Prostate gland (tissue), 2 donors: ENCODE measurements at regions of chr4 and their contacts with region 1.

Region 1: GRCh38 chr4:87043044-87043820 is 108.4 kb downstream of the AFF1 start:
- DNase-seq: no peak
- H3K4me3 ChIP-seq: no peak overlapping the region
- H3K27ac ChIP-seq: no peak overlapping the region
- H3K4me1 ChIP-seq: peaks cover 3% of the 10 kb centered on the region
- H3K27me3 ChIP-seq: no peaks in the 10 kb centered on the region
- CTCF ChIP-seq: no peak
- POLR2A ChIP-seq: no peak

Region 2: GRCh38 chr4:87006676-87007527 is 36.3 kb before region 1 on chr4:
- intact Hi-C with region 1: loop called (anchors 5 kb)
- DNase-seq: peak; percentile 93
- H3K4me3 ChIP-seq: peak overlapping the region; percentile 69 to 82
- H3K27ac ChIP-seq: peak overlapping the region; percentile 96 to 97
- H3K4me1 ChIP-seq: peaks cover 12% of the 10 kb centered on the region
- H3K27me3 ChIP-seq: no peaks in the 10 kb centered on the region
- CTCF ChIP-seq: peak in 1 of 4 experiments; percentile 21
- POLR2A ChIP-seq: peak; percentile 95

Region 3: GRCh38 chr4:87078987-87079486 is 35.8 kb after region 1 on chr4:
- intact Hi-C with region 1: loop called (anchors 5 kb)
- DNase-seq: peak; percentile 66
- H3K4me3 ChIP-seq: no peak overlapping the region
- H3K27ac ChIP-seq: peak overlapping the region; percentile 39 to 49
- H3K4me1 ChIP-seq: peaks cover 26% of the 10 kb centered on the region
- H3K27me3 ChIP-seq: no peaks in the 10 kb centered on the region
- CTCF ChIP-seq: no peak
- POLR2A ChIP-seq: no peak